Vagina (tissue), 2 donors: ENCODE measurements at regions of chr19 and their contacts with region 1.

Region 1: DNA sequence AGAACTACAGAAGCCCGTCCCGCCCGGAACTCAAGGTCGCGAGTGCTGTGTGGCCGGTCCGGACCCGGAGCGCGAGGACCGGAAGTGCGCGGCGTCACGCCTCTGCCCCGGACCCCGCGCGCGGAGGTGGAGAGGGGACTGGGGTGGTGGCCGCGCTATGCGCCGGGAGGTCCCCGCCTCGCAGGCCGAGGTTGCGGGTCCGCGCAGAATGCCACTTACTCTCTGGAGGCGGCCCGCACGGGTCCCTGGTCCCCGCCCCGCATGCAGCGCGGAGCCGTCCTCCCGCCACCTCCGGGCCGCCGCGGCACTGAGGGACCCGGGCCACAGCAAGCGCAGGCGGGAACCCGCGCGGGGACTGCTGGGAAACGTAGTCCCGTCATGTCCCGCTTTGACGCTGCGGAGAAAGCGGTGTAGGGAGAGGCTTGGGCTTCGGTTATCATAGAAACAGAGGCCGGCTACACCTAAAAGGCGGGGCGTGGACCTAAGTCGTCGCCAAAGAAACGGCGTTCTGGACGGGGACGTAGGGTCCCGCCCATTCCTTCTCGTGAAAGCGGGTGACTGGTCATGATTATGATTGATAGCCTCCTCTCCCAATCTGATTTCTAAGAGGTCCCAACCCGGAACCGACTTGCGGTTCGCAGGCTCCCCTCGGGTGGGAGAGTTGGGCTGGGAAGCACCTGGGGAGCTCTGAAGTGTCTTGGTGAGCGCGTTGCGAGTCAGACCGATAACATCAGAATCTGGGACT is at the start of gene ZNF837:
- DNase-seq: peak; percentile 100
- H3K4me3 ChIP-seq: peak within 1 kb of the TSS; percentile 69 to 72
- H3K27ac ChIP-seq: peak within 1 kb of the TSS; percentile 90
- H3K4me1 ChIP-seq: peaks cover 31% of the 10 kb centered on the region
- H3K27me3 ChIP-seq: no peaks in the 10 kb centered on the region
- CTCF ChIP-seq: peak in 1 of 3 experiments; percentile 22
- POLR2A ChIP-seq: peak in 1 of 2 donors; percentile 67
- total RNA-seq, gene ZNF837: 1.2 TPM

Region 2: GRCh38 chr19:57746580-57747471 is 634.1 kb before region 1 on chr19 and contains the start of gene ZNF776:
- intact Hi-C with region 1: no loop called
- DNase-seq: no peak
- H3K4me3 ChIP-seq: peak within 1 kb of the TSS; percentile 58 to 91
- H3K27ac ChIP-seq: peak within 1 kb of the TSS; percentile 76
- H3K4me1 ChIP-seq: peaks cover 12% of the 10 kb centered on the region
- H3K27me3 ChIP-seq: no peaks in the 10 kb centered on the region
- CTCF ChIP-seq: no peak
- POLR2A ChIP-seq: no peak
- total RNA-seq, gene ZNF776: 6.9 TPM

Region 3: GRCh38 chr19:58466760-58467589 is 86.1 kb after region 1 on chr19 and contains the start of gene ZNF324:
- intact Hi-C with region 1: loop called (anchors 5 kb)
- DNase-seq: peak in 1 of 2 donors; percentile 95
- H3K4me3 ChIP-seq: peak within 1 kb of the TSS; percentile 72 to 95
- H3K27ac ChIP-seq: peak within 1 kb of the TSS; percentile 60
- H3K4me1 ChIP-seq: peaks cover 19% of the 10 kb centered on the region
- H3K27me3 ChIP-seq: no peaks in the 10 kb centered on the region
- CTCF ChIP-seq: no peak
- POLR2A ChIP-seq: peak in 1 of 2 donors; percentile 23
- total RNA-seq, gene ZNF324: 17.2 TPM